Activated naive CD4-positive, alpha-beta T cell treated with anti-CD3 and anti-CD28 coated beads for 36 hours (primary cell): ENCODE measurements at regions of chr4 and their contacts with region 1.

Region 1: DNA sequence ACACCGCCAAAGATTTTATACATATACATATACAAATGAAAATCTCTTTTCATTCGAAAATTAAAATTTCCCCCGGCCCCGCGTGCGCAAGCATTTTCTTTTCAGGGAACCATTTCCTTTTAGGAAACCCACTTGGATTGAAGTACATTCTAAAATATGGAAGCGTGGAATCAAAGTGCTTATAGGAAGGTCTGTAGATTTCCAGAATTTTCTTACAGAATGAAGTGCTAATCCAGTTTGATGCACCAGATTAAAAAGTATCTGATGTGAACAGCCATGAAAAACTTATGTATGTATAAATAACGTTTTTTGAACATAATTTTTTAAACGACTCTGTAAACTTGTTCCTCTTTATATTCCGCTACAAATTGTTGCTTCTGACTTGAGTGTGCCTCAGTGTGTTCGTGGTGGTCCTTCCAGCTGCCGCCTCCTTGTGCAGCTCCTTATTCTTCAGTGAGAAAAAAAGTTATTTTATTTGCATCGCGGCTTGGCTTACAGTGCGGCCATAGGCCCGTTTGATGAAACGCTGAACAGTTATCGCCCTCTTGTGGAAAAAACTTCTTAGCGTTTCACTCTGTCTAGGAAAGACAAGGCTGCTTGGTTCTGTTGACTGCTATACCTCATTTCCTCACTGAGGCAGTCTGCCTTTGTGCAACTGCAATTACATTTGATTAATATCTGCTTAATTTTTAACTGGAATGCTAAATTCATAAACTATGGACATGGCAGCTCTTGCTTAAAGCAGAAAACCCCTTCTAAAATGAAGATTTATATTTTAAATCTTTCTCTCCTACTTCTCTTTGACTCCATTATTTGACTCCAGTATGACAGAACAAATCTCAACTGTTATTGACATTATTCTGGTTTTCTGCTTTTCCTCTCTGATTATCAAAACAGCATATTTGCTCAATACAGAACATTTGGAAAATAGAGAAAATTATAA is 4.7 kb upstream of the NKX6-1 start:
- DNase-seq: peak; percentile 43
- H3K4me3 Mint-ChIP-seq: no peak overlapping the region
- H3K27ac Mint-ChIP-seq: peak overlapping the region; percentile 63
- H3K4me1 Mint-ChIP-seq: peaks cover 14% of the 10 kb centered on the region
- H3K27me3 Mint-ChIP-seq: peaks cover 76% of the 10 kb centered on the region

Region 2: GRCh38 chr4:83503974-83504373 is 999.8 kb before region 1 on chr4:
- CTCF ChIA-PET with region 1: no interaction called
- intact Hi-C with region 1: loop called (anchors 5 kb)
- DNase-seq: peak; percentile 49
- H3K4me3 Mint-ChIP-seq: no peak overlapping the region
- H3K27ac Mint-ChIP-seq: peak overlapping the region; percentile 64
- H3K4me1 Mint-ChIP-seq: peaks cover 14% of the 10 kb centered on the region
- H3K27me3 Mint-ChIP-seq: no peaks in the 10 kb centered on the region

Region 3: DNA sequence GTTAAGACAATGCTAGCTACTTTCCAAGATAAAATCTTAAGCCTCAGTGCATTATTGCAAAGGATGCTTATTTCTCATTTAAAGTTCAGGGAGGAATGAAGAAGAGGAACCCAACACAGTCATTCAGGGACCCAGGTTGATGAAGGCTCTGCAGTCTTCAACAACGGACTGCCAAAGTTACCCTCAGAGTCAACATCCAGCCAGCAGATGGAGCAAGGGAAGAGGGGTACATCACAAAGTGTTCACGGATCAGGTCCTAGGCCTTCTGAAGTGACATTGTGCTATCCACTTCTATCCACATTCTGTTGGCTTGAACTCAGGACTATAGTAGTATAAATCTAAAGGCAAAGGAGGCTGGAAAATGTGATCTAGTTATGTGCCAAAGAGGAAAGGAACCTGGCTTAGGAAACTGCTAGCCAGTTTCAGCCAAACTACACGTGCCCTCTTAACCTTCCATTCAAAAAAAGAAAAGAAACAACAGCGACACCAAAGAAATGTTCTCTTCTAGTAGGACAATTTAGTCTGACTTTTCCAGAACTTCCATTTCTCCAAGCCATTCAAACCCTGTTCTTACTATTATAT is 33.5 kb before region 1 on chr4:
- CTCF ChIA-PET with region 1: no interaction called
- intact Hi-C with region 1: loop called (anchors 1 kb)
- DNase-seq: peak; percentile 15
- H3K4me3 Mint-ChIP-seq: no peak overlapping the region
- H3K27ac Mint-ChIP-seq: no peak overlapping the region
- H3K4me1 Mint-ChIP-seq: no peaks in the 10 kb centered on the region
- H3K27me3 Mint-ChIP-seq: peaks cover 25% of the 10 kb centered on the region

Region 4: GRCh38 chr4:84493092-84493850 is 10.5 kb before region 1 on chr4:
- CTCF ChIA-PET with region 1: interaction called, 7 read pairs
- intact Hi-C with region 1: loop called (anchors 1 kb)
- DNase-seq: peak; percentile 41
- H3K4me3 Mint-ChIP-seq: peak overlapping the region; percentile 47
- H3K27ac Mint-ChIP-seq: no peak overlapping the region
- H3K4me1 Mint-ChIP-seq: peaks cover 9% of the 10 kb centered on the region
- H3K27me3 Mint-ChIP-seq: peaks cover 78% of the 10 kb centered on the region

Region 5: GRCh38 chr4:84804136-84804535 is 300.4 kb after region 1 on chr4:
- CTCF ChIA-PET with region 1: no interaction called
- intact Hi-C with region 1: no loop called
- DNase-seq: no peak
- H3K4me3 Mint-ChIP-seq: no peak overlapping the region
- H3K27ac Mint-ChIP-seq: no peak overlapping the region
- H3K4me1 Mint-ChIP-seq: no peaks in the 10 kb centered on the region
- H3K27me3 Mint-ChIP-seq: peaks cover 4% of the 10 kb centered on the region

Region 6: DNA sequence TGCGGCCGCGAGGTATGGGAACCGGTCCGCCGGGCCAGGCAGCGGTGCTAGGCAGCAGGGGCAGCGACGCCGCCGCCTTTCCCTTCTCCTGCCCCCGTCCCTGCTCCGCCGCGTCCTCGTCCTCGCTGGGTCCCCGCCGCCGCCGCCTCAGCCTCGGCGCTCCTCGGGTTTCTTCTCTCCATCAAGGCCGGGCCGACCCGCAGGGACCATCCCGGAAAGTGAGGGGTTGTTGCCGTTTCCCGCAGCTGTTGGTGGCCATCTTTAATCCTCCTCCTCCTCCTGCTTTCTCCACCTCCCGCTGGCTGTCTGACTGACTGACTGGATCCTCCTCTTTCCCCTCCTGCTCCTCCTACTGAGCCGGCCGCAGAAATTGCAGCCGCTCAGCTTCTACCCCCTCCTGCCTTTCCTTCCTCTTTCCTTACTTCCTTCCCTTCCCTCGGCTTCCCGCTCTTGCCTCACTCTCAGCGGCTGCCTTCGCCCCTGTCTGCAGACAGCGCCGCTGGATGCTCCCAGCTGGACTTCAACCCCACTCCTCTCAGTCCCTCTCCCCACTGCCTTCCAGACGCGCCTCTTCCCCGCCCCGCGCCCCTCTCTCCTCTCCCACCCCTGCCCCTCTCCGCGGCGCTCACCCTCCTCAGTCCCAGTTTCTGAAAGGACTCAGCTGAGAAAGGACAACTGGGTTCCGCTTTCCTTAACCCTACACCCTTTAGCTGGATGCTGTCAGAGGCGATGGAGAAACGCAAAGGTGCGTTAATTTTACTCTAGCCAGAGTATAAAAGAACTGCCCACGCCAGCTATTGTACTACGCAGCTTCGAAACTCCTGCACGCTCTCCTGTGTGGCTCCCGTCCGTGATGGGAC is 462.8 kb after region 1 on chr4 and contains the start of gene WDFY3:
- CTCF ChIA-PET with region 1: no interaction called
- intact Hi-C with region 1: loop called (anchors 5 kb)
- DNase-seq: peak; percentile 35
- H3K4me3 Mint-ChIP-seq: peak within 1 kb of the TSS; percentile 85
- H3K27ac Mint-ChIP-seq: no peak within 1 kb of the TSS
- H3K4me1 Mint-ChIP-seq: peaks cover 14% of the 10 kb centered on the region
- H3K27me3 Mint-ChIP-seq: peaks cover 38% of the 10 kb centered on the region
- total RNA-seq, gene WDFY3: 1.0 to 1.2 TPM